ENCODE measurements at regions of chr17 and their contacts with region 1.

Region 1: GRCh38 chr17:38605888-38606645 is at the start of gene SRCIN1:
- DNase-seq: no peak
- ATAC-seq: peak; percentile 65
- H3K4me3 ChIP-seq: peak within 1 kb of the TSS; percentile 49 to 56
- H3K27ac ChIP-seq: no peak within 1 kb of the TSS
- H3K4me1 ChIP-seq: peaks cover 14% of the 10 kb centered on the region
- H3K27me3 ChIP-seq: no peaks in the 10 kb centered on the region
- CTCF ChIP-seq: peak; percentile 97
- total RNA-seq, gene SRCIN1: 12.8 TPM

Region 2: DNA sequence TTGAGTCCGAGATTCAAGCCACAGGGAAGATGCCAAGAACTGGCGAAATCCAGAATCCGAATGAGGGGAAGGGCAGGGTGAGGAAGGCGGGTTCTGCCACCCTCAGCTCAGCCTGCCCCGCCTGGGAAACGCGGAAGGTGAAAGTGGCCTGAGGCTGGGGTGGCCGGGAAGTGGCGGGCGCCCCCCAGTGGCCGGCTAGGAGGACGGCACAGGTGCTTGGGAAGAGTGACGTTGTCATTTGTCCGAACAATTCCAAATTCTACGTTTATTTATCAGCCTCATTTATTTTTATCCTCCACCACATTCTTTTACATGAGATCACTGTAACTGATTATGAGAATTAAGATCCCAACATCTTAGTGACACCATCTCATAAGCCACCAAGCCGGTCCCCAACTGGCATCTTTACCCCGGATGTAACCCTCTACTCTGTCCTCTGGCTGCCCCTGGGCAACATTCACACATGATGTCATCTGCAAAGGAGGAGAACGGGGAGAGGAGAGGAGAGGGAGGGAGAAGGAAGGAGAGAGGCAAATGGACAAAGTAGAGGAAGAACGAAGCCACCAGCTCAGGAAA is 21.6 kb before region 1 on chr17:
- CTCF ChIA-PET with region 1: no interaction called
- POLR2A ChIA-PET with region 1: no interaction called
- in situ Hi-C with region 1: no loop called
- intact Hi-C with region 1: no loop called
- DNase-seq: no peak
- ATAC-seq: peak; percentile 90
- H3K4me3 ChIP-seq: 0 out of 4 replicates have a peak overlapping the region, but pooled peaks of 1 of the 2 experiments have one; percentile 18
- H3K27ac ChIP-seq: no peak overlapping the region
- H3K4me1 ChIP-seq: peaks cover 7% of the 10 kb centered on the region
- H3K27me3 ChIP-seq: no peaks in the 10 kb centered on the region
- CTCF ChIP-seq: peak; percentile 91

Region 3: DNA sequence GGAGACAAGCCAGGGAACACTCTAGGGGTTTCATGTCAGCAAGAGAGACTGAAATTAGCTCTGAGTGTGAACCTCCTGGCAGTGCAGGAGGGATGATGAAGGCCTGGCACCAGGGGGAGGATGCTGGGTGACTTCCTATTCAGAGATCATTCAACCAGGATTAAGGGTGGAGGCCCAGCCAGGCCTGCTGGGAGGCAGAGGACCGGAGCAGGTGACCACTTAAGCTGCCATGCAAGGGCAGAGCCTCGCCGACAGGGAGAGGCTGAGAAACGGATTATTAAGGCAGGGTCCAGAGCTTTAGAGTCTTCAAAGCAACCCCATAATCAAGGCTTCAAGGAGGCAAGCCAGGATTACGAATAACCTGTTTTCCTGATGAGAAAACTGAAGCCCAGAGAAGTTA is 10.3 kb after region 1 on chr17:
- CTCF ChIA-PET with region 1: no interaction called
- POLR2A ChIA-PET with region 1: interaction called, 12 read pairs
- in situ Hi-C with region 1: no loop called
- intact Hi-C with region 1: no loop called
- DNase-seq: no peak
- ATAC-seq: no peak
- H3K4me3 ChIP-seq: no peak overlapping the region
- H3K27ac ChIP-seq: no peak overlapping the region
- H3K4me1 ChIP-seq: no peaks in the 10 kb centered on the region
- H3K27me3 ChIP-seq: no peaks in the 10 kb centered on the region
- CTCF ChIP-seq: no peak

Region 4: GRCh38 chr17:38628441-38628840 is 22.4 kb after region 1 on chr17:
- CTCF ChIA-PET with region 1: interaction called, 10 read pairs
- POLR2A ChIA-PET with region 1: no interaction called
- in situ Hi-C with region 1: no loop called
- intact Hi-C with region 1: no loop called
- DNase-seq: no peak
- ATAC-seq: peak; percentile 48; the same call in 1 of the 2 replicates
- H3K4me3 ChIP-seq: no peak overlapping the region
- H3K27ac ChIP-seq: no peak overlapping the region
- H3K4me1 ChIP-seq: no peaks in the 10 kb centered on the region
- H3K27me3 ChIP-seq: no peaks in the 10 kb centered on the region
- CTCF ChIP-seq: no peak

Measured in Panc1 (cell line).